Cardiac septum (tissue), 1 donor: ENCODE measurements at regions of chr1 and their contacts with region 1.

Region 1: GRCh38 chr1:241622669-241623068 is 17.5 kb downstream of the CHML start:
- DNase-seq: no peak

Region 2: GRCh38 chr1:241531195-241532161 is 91.2 kb before region 1 on chr1:
- intact Hi-C with region 1: loop called (anchors 5 kb)
- DNase-seq: no peak